Adrenal gland (tissue), 19 donors: ENCODE measurements at regions of chr4 and their contacts with region 1.

Region 1: GRCh38 chr4:38034986-38035882 is 75.0 kb downstream of the PTTG2 start:
- DNase-seq: peak in 4 of 7 donors; percentile 41 to 66 (median 54)
- H3K4me3 ChIP-seq: no peak overlapping the region
- H3K27ac ChIP-seq: no peak overlapping the region
- H3K4me1 ChIP-seq: no peaks in the 10 kb centered on the region
- H3K27me3 ChIP-seq: no peaks in the 10 kb centered on the region
- CTCF ChIP-seq: peak; percentile 51 to 81 (median 72)
- POLR2A ChIP-seq: no peak

Region 2: GRCh38 chr4:37603070-37603468 is 432.2 kb before region 1 on chr4:
- intact Hi-C with region 1: loop called (anchors 5 to 10 kb)
- DNase-seq: peak; percentile 76 to 93 (median 84)
- H3K4me3 ChIP-seq: no peak overlapping the region
- H3K27ac ChIP-seq: no peak overlapping the region
- H3K4me1 ChIP-seq: no peaks in the 10 kb centered on the region
- H3K27me3 ChIP-seq: no peaks in the 10 kb centered on the region
- CTCF ChIP-seq: peak; percentile 94 to 98 (median 96)
- POLR2A ChIP-seq: no peak

Region 3: GRCh38 chr4:37802068-37802666 is 233.1 kb before region 1 on chr4:
- intact Hi-C with region 1: loop called (anchors 5 to 10 kb)
- DNase-seq: peak; percentile 28 to 85 (median 64)
- H3K4me3 ChIP-seq: no peak overlapping the region
- H3K27ac ChIP-seq: no peak overlapping the region
- H3K4me1 ChIP-seq: no peaks in the 10 kb centered on the region
- H3K27me3 ChIP-seq: no peaks in the 10 kb centered on the region
- CTCF ChIP-seq: peak; percentile 53 to 79 (median 61)
- POLR2A ChIP-seq: no peak